ENCODE measurements at regions of chr3 and their contacts with region 1.

Region 1: DNA sequence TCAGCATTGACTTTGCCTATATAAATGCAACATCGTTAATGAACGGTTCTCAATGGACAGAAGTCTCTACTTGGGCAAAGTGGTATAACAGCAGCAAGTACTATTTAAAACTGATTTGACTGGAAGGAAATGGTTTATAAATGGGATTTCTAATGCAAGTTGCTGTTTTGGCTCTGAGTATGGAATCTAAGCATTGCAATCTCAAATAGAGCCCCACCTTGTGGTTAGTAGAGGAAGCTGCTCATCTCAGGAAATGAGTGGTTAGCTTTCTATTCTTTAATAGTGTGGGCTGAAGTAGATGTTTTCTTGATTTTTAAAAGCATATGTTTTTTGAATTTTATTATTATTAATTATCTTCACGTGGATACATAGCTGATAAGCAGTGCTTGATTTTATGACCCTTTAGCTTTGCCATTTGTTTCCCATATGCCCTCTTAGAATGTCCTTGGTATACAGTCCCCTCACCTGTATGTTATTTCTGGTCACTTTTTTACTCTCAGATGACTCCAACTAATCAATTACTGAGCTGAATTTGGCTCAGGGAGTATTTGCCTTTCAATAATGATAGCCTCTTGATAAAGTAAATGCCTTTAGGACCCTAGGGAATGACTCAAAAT is 67.1 kb downstream of the OXSM start:
- DNase-seq: no peak
- ATAC-seq: peak; percentile 95
- H3K4me3 ChIP-seq: no peak overlapping the region
- H3K27ac ChIP-seq: no peak overlapping the region
- H3K4me1 ChIP-seq: no peaks in the 10 kb centered on the region
- H3K27me3 ChIP-seq: peaks cover 0 to 2% of the 10 kb centered on the region in 2 experiments; a peak in 1 of 4 replicates
- CTCF ChIP-seq: peak; percentile 60 to 74 (median 66)
- EP300 ChIP-seq: no peak
- POLR2A ChIP-seq: no peak
- RAD21 ChIP-seq: peak; percentile 74

Region 2: GRCh38 chr3:25655659-25656058 is 201.4 kb before region 1 on chr3:
- CTCF ChIA-PET with region 1: interaction called, 136 read pairs
- POLR2A ChIA-PET with region 1: no interaction called
- RAD21 ChIA-PET with region 1: interaction called, 54 read pairs
- SMC1A ChIA-PET with region 1: interaction called, 121 read pairs
- in situ Hi-C with region 1: loop called (anchors 5 kb)
- intact Hi-C with region 1: no loop called
- DNase-seq: no peak
- ATAC-seq: 0 out of 3 replicates have a peak, but pooled peaks have one; percentile 3
- H3K4me3 ChIP-seq: no peak overlapping the region
- H3K27ac ChIP-seq: no peak overlapping the region
- H3K4me1 ChIP-seq: peaks cover 2% of the 10 kb centered on the region; the same call in 1 of the 2 replicates
- H3K27me3 ChIP-seq: no peaks in the 10 kb centered on the region
- CTCF ChIP-seq: no peak
- EP300 ChIP-seq: no peak
- POLR2A ChIP-seq: no peak
- RAD21 ChIP-seq: no peak

Region 3: GRCh38 chr3:25768851-25769250 is 88.2 kb before region 1 on chr3:
- CTCF ChIA-PET with region 1: interaction called, 11 read pairs
- POLR2A ChIA-PET with region 1: no interaction called
- RAD21 ChIA-PET with region 1: interaction called, 3 read pairs
- SMC1A ChIA-PET with region 1: no interaction called
- in situ Hi-C with region 1: no loop called
- intact Hi-C with region 1: no loop called
- DNase-seq: no peak
- ATAC-seq: peak; percentile 94
- H3K4me3 ChIP-seq: no peak overlapping the region
- H3K27ac ChIP-seq: no peak overlapping the region; the same call in 1 of the 2 replicates
- H3K4me1 ChIP-seq: peaks cover 10% of the 10 kb centered on the region
- H3K27me3 ChIP-seq: no peaks in the 10 kb centered on the region
- CTCF ChIP-seq: no peak
- EP300 ChIP-seq: peak; percentile 40 to 51; a peak in 2 of 4 replicates
- POLR2A ChIP-seq: no peak
- RAD21 ChIP-seq: no peak

Region 4: GRCh38 chr3:25801786-25802185 is 55.2 kb before region 1 on chr3:
- CTCF ChIA-PET with region 1: interaction called, 11 read pairs
- POLR2A ChIA-PET with region 1: no interaction called
- RAD21 ChIA-PET with region 1: interaction called, 4 read pairs
- SMC1A ChIA-PET with region 1: no interaction called
- in situ Hi-C with region 1: no loop called
- intact Hi-C with region 1: no loop called
- DNase-seq: no peak
- ATAC-seq: no peak
- H3K4me3 ChIP-seq: no peak overlapping the region
- H3K27ac ChIP-seq: no peak overlapping the region
- H3K4me1 ChIP-seq: no peaks in the 10 kb centered on the region
- H3K27me3 ChIP-seq: no peaks in the 10 kb centered on the region
- CTCF ChIP-seq: no peak
- EP300 ChIP-seq: no peak
- POLR2A ChIP-seq: no peak
- RAD21 ChIP-seq: no peak

Region 5: GRCh38 chr3:25843332-25843731 is 13.7 kb before region 1 on chr3:
- CTCF ChIA-PET with region 1: interaction called, 12 read pairs
- POLR2A ChIA-PET with region 1: interaction called, 3 read pairs
- RAD21 ChIA-PET with region 1: interaction called, 5 read pairs
- SMC1A ChIA-PET with region 1: interaction called, 18 read pairs
- in situ Hi-C with region 1: no loop called
- intact Hi-C with region 1: no loop called
- DNase-seq: no peak
- ATAC-seq: no peak
- H3K4me3 ChIP-seq: no peak overlapping the region
- H3K27ac ChIP-seq: no peak overlapping the region
- H3K4me1 ChIP-seq: no peaks in the 10 kb centered on the region
- H3K27me3 ChIP-seq: no peaks in the 10 kb centered on the region
- CTCF ChIP-seq: no peak; a peak in 1 of 6 replicates
- EP300 ChIP-seq: no peak
- POLR2A ChIP-seq: no peak
- RAD21 ChIP-seq: peak; percentile 31; the same call in 1 of the 2 replicates

Region 6: GRCh38 chr3:25897019-25897418 is 40.0 kb after region 1 on chr3:
- CTCF ChIA-PET with region 1: interaction called, 5 read pairs
- POLR2A ChIA-PET with region 1: no interaction called
- RAD21 ChIA-PET with region 1: no interaction called
- SMC1A ChIA-PET with region 1: interaction called, 8 read pairs
- in situ Hi-C with region 1: no loop called
- intact Hi-C with region 1: loop called (anchors 5 kb)
- DNase-seq: no peak
- ATAC-seq: peak; percentile 98
- H3K4me3 ChIP-seq: no peak overlapping the region
- H3K27ac ChIP-seq: no peak overlapping the region
- H3K4me1 ChIP-seq: no peaks in the 10 kb centered on the region
- H3K27me3 ChIP-seq: no peaks in the 10 kb centered on the region
- CTCF ChIP-seq: peak; percentile 84 to 90 (median 89)
- EP300 ChIP-seq: no peak
- POLR2A ChIP-seq: no peak
- RAD21 ChIP-seq: peak; percentile 81

Region 7: GRCh38 chr3:26091096-26091495 is 234.1 kb after region 1 on chr3:
- CTCF ChIA-PET with region 1: no interaction called
- POLR2A ChIA-PET with region 1: no interaction called
- RAD21 ChIA-PET with region 1: no interaction called
- SMC1A ChIA-PET with region 1: no interaction called
- in situ Hi-C with region 1: no loop called
- intact Hi-C with region 1: no loop called
- DNase-seq: no peak
- ATAC-seq: no peak
- H3K4me3 ChIP-seq: no peak overlapping the region
- H3K27ac ChIP-seq: no peak overlapping the region
- H3K4me1 ChIP-seq: no peaks in the 10 kb centered on the region
- H3K27me3 ChIP-seq: no peaks in the 10 kb centered on the region
- CTCF ChIP-seq: no peak
- EP300 ChIP-seq: no peak
- POLR2A ChIP-seq: no peak
- RAD21 ChIP-seq: no peak

Region 8: GRCh38 chr3:26273196-26273595 is 416.2 kb after region 1 on chr3:
- CTCF ChIA-PET with region 1: no interaction called
- POLR2A ChIA-PET with region 1: no interaction called
- RAD21 ChIA-PET with region 1: no interaction called
- SMC1A ChIA-PET with region 1: no interaction called
- in situ Hi-C with region 1: no loop called
- intact Hi-C with region 1: no loop called
- DNase-seq: no peak
- ATAC-seq: no peak
- H3K4me3 ChIP-seq: no peak overlapping the region
- H3K27ac ChIP-seq: no peak overlapping the region
- H3K4me1 ChIP-seq: no peaks in the 10 kb centered on the region
- H3K27me3 ChIP-seq: no peaks in the 10 kb centered on the region
- CTCF ChIP-seq: no peak
- EP300 ChIP-seq: no peak
- POLR2A ChIP-seq: no peak
- RAD21 ChIP-seq: no peak